ENCODE measurements at regions of chr18 and their contacts with region 1.

Region 1: GRCh38 chr18:5596585-5596984 is 52.8 kb upstream of the EPB41L3 start:
- DNase-seq: no peak
- ATAC-seq: no peak

Region 2: GRCh38 chr18:4908328-4908727 is 688.3 kb before region 1 on chr18:
- intact Hi-C with region 1: no loop called
- DNase-seq: no peak
- ATAC-seq: no peak

Region 3: DNA sequence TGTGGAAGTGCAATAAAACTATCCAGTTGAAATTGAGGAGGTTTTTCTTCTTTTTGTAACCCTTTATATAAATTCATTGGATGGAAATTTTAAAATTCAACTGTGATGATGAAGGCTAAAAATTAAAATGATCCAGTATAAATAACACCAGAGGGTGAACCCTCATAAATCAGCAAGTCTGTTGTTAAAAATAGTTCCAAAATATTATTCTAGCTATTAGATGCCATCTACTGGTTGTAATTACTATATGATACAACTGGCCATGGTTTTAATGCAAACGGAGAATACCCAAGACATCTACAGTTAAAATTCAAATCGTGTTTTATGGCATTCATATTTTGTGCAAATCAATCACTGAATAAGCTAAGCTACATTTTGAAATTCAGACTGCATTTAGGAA is 244.9 kb after region 1 on chr18:
- intact Hi-C with region 1: loop called (anchors 10 kb)
- DNase-seq: no peak
- ATAC-seq: no peak